Activated CD4-positive, alpha-beta memory T cell treated with anti-CD3 and anti-CD28 coated beads for 36 hours (primary cell): ENCODE measurements at regions of chr20 and their contacts with region 1.

Region 1: DNA sequence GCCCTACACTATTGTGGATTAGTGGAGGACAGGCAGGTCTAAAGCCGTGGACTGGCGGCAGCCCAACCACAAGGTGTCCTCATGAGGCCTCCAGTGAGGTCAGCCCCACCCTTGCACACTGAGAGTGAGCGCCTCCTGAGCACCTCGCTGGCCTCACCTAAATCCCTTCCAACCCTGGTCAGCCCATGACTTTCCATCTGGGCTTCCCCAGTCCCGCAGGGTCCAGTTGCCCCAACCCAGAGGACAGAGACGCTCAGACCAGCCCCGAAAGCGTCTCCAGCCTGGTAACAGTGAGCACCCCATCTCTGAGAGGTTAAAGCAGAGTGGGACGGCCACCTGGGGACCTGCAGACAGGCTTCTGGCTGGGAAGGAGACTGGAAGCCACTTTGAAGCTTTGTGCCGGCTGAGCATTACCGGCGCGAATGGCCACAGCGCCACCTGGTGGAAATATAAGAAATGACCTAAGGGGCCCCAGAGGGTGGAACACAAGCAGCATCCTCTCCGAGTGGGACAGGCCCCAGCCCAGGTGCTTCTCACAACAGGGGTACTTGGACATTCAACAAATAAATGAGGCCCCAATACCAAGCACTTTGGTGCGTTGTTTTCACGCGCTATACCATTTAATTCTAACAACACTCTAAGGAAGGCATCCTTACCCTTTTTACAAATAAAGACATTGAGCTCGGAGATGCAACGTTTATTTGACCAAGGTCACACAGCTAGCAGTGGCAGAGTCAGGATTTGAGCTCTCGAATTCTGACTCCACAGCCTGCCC is 65.7 kb upstream of the TOP1 start:
- DNase-seq: peak; percentile 82
- H3K4me3 Mint-ChIP-seq: no peak overlapping the region
- H3K27ac Mint-ChIP-seq: no peak overlapping the region
- H3K4me1 Mint-ChIP-seq: peaks cover 9% of the 10 kb centered on the region
- H3K27me3 Mint-ChIP-seq: no peaks in the 10 kb centered on the region

Region 2: GRCh38 chr20:40160097-40160550 is 802.8 kb before region 1 on chr20:
- CTCF ChIA-PET with region 1: interaction called, 3 read pairs
- POLR2A ChIA-PET with region 1: no interaction called
- intact Hi-C with region 1: loop called (anchors 5 kb)
- DNase-seq: peak; percentile 17
- H3K4me3 Mint-ChIP-seq: no peak overlapping the region
- H3K27ac Mint-ChIP-seq: no peak overlapping the region
- H3K4me1 Mint-ChIP-seq: no peaks in the 10 kb centered on the region
- H3K27me3 Mint-ChIP-seq: no peaks in the 10 kb centered on the region

Region 3: GRCh38 chr20:40797425-40797824 is 165.5 kb before region 1 on chr20:
- CTCF ChIA-PET with region 1: interaction called, 18 read pairs
- POLR2A ChIA-PET with region 1: no interaction called
- intact Hi-C with region 1: loop called (anchors 1 kb)
- DNase-seq: no peak
- H3K4me3 Mint-ChIP-seq: no peak overlapping the region
- H3K27ac Mint-ChIP-seq: no peak overlapping the region
- H3K4me1 Mint-ChIP-seq: no peaks in the 10 kb centered on the region
- H3K27me3 Mint-ChIP-seq: peaks cover 2% of the 10 kb centered on the region

Region 4: DNA sequence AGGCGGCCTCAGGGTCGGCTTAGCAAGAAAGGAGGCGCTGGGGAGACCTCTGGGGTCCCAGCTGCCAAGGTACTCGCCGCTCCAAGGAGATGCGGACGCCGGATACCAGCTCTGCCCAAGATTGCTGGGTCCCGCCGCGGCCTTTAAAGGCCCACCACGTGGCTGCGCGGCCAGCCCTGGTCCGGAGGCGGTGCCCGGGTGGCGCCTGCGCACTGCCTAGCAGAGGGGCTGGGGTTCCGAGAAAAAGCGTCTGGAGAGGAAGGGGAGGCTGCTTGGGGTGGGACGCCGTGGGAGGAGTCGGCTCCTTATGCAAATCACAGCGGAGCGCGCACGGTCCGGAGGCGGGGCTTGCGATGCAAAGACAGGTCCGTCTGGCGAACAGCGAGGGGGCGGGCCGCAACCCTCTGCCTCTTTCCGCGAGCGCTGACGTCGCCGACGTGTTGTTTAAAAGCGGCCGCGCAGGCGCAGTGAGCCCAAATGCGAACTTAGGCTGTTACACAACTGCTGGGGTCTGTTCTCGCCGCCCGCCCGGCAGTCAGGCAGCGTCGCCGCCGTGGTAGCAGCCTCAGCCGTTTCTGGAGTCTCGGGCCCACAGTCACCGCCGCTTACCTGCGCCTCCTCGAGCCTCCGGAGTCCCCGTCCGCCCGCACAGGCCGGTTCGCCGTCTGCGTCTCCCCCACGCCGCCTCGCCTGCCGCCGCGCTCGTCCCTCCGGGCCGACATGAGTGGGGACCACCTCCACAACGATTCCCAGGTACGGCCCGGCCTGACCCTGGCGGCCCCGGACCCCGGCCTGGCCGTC is 65.6 kb after region 1 on chr20 and contains the start of gene TOP1:
- CTCF ChIA-PET with region 1: no interaction called
- POLR2A ChIA-PET with region 1: no interaction called
- intact Hi-C with region 1: no loop called
- DNase-seq: peak; percentile 100
- H3K4me3 Mint-ChIP-seq: peak within 1 kb of the TSS; percentile 85
- H3K27ac Mint-ChIP-seq: peak within 1 kb of the TSS; percentile 89
- H3K4me1 Mint-ChIP-seq: peaks cover 47% of the 10 kb centered on the region
- H3K27me3 Mint-ChIP-seq: no peaks in the 10 kb centered on the region
- total RNA-seq, gene TOP1: 128 TPM

Region 5: GRCh38 chr20:41095110-41095969 is 132.4 kb after region 1 on chr20:
- CTCF ChIA-PET with region 1: interaction called, 139 read pairs
- POLR2A ChIA-PET with region 1: no interaction called
- intact Hi-C with region 1: loop called (anchors 1 kb)
- DNase-seq: peak; percentile 71
- H3K4me3 Mint-ChIP-seq: no peak overlapping the region
- H3K27ac Mint-ChIP-seq: peak overlapping the region; percentile 90
- H3K4me1 Mint-ChIP-seq: peaks cover 22% of the 10 kb centered on the region
- H3K27me3 Mint-ChIP-seq: no peaks in the 10 kb centered on the region

Region 6: GRCh38 chr20:41339507-41340326 is 376.8 kb after region 1 on chr20:
- CTCF ChIA-PET with region 1: interaction called, 10 read pairs
- POLR2A ChIA-PET with region 1: no interaction called
- intact Hi-C with region 1: loop called (anchors 1 kb)
- DNase-seq: peak; percentile 90
- H3K4me3 Mint-ChIP-seq: peak overlapping the region; percentile 63
- H3K27ac Mint-ChIP-seq: no peak overlapping the region
- H3K4me1 Mint-ChIP-seq: peaks cover 5% of the 10 kb centered on the region
- H3K27me3 Mint-ChIP-seq: peaks cover 7% of the 10 kb centered on the region